Mammary epithelial cell (primary cell): ENCODE measurements at regions of chr7 and their contacts with region 1.

Region 1: GRCh38 chr7:149497456-149498261 is at the start of gene ZNF746:
- DNase-seq: peak; percentile 77
- H3K4me3 ChIP-seq: peak within 1 kb of the TSS; percentile 58 to 97 (median 88)
- H3K27ac ChIP-seq: peak within 1 kb of the TSS; percentile 58
- H3K4me1 ChIP-seq: peaks cover 11% of the 10 kb centered on the region
- H3K27me3 ChIP-seq: no peaks in the 10 kb centered on the region
- CTCF ChIP-seq: peak; percentile 22 to 67
- total RNA-seq, gene ZNF746: 22.1 to 34.3 TPM

Region 2: DNA sequence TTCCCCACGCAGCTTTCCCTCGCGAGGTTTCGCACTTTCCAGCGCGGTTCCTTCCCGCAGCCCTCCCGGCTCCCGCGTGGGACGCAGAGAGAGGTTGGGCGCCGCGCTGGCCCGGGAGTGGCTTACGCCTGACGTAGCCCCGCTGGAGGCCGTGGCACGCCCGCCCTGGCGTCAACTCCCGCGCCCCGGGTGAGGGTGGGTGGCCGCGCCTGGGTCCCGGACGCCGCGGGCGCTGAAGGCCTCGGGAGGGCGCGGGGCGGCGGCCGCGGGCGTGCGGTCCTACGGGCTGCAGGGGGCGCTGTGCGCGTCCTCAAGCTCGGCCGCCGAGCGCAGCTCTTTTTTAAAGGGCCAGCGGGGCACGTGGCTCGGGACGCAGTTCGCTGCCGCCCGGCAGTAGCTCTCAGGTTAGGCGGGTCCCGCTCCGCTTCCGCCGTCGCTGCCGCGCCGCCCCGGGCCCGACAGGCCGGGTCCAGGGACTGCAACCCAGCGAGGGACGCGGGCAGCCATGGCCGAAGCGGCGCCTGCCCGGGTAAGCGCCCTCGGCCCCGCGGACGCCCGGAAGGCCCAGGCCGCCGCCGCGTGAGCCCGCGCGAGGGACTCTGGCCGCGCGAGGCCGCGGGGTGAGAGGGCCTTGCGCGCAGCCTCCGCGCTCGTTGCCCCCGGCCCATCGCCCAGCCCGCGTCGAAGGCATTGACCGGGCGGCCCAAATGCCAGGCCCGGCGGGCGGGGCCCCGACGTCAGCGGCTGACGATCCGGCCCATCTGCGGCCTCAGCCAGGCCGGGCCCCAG is 235.6 kb before region 1 on chr7 and contains the start of gene ZNF783:
- CTCF ChIA-PET with region 1: no interaction called
- dilution Hi-C with region 1: no loop called
- in situ Hi-C with region 1: no loop called
- intact Hi-C with region 1: loop called (anchors 5 kb)
- DNase-seq: peak; percentile 77
- H3K4me3 ChIP-seq: peak within 1 kb of the TSS; percentile 53 to 70 (median 67)
- H3K27ac ChIP-seq: peak within 1 kb of the TSS; percentile 65
- H3K4me1 ChIP-seq: peaks cover 25% of the 10 kb centered on the region
- H3K27me3 ChIP-seq: no peaks in the 10 kb centered on the region
- CTCF ChIP-seq: peak; percentile 46 to 66
- total RNA-seq, gene ZNF783: 11.7 to 14.5 TPM

Region 3: GRCh38 chr7:149310113-149310836 is 187.4 kb before region 1 on chr7:
- CTCF ChIA-PET with region 1: no interaction called
- dilution Hi-C with region 1: no loop called
- in situ Hi-C with region 1: no loop called
- intact Hi-C with region 1: loop called (anchors 2 kb)
- DNase-seq: peak; percentile 85
- H3K4me3 ChIP-seq: no peak overlapping the region
- H3K27ac ChIP-seq: no peak overlapping the region
- H3K4me1 ChIP-seq: no peaks in the 10 kb centered on the region
- H3K27me3 ChIP-seq: no peaks in the 10 kb centered on the region
- CTCF ChIP-seq: peak; percentile 63 to 71

Region 4: DNA sequence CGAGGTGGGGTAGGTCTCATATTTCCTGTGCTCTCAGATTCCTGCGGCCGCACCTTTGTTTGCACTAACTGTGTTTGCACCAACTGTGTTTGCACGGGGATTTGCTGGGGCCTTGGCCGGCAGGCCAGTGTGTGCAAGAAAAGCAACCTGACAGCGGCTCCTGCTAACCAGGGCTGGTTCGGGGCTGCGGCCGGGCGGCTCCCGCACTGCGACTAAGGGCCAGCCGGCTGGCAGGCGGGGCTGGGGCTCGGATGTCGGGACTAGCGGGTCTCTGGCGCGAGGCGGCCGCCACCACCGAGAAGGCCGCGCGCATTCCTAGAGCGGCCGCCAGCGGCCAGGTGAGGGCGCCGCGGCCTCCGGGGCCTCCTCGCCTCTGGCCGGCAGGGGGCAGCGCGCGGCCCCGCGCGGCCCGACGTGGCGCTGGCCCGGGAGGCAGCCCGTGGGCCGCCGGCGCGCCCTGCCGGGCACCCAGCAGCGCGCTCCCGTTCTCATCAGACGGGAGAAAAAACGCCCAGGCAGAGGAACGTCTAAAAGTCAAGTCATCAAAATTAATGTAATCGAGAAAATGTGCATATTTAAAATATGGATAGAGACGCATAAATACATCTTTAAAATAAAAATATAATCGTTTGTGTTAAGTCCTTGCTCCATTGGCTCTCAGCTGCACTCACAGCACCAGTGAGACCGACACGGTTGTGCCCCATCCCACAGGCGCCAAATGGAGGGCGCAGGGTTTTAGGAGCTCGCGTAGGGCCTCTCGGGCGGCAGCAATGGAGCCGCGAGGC is 75.3 kb before region 1 on chr7:
- CTCF ChIA-PET with region 1: no interaction called
- dilution Hi-C with region 1: no loop called
- in situ Hi-C with region 1: no loop called
- intact Hi-C with region 1: loop called (anchors 2 kb)
- DNase-seq: peak; percentile 64
- H3K4me3 ChIP-seq: peak overlapping the region; percentile 47 to 56 (median 50)
- H3K27ac ChIP-seq: no peak overlapping the region
- H3K4me1 ChIP-seq: peaks cover 4% of the 10 kb centered on the region
- H3K27me3 ChIP-seq: no peaks in the 10 kb centered on the region
- CTCF ChIP-seq: peak; percentile 49 to 66

Region 5: GRCh38 chr7:149430192-149430591 is 67.5 kb before region 1 on chr7:
- CTCF ChIA-PET with region 1: no interaction called
- dilution Hi-C with region 1: loop called (anchors 5 kb)
- in situ Hi-C with region 1: no loop called
- intact Hi-C with region 1: no loop called
- DNase-seq: no peak
- H3K4me3 ChIP-seq: no peak overlapping the region
- H3K27ac ChIP-seq: no peak overlapping the region
- H3K4me1 ChIP-seq: no peaks in the 10 kb centered on the region
- H3K27me3 ChIP-seq: no peaks in the 10 kb centered on the region
- CTCF ChIP-seq: no peak

Region 6: DNA sequence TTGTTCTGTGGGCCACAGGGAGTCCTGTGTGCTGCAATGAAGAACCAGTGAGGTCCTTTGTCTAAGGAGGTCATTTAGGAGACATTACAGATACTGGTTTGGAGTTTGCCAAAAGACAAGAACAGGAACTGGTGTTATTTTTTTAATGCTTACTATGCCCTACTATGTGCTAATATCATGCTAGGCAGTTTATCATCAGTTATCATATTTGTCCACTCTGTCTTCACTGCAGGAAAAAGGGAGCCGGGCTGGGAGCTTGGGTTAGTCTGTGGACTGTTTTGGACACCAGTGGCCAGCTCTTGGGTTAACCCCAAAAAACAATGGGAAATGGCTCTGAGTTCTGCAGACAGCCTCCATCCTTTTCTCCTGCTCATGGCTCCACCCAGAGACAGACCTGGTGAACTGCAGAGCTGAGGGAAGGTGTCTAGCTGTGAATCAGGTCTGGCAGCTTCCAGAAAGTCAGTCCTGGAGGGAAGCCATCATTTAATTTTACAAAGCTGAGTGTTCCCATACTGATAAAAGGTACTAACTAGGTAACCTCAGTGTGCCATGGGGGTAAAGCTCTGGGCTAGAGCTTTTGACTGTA is 101.2 kb after region 1 on chr7:
- CTCF ChIA-PET with region 1: no interaction called
- dilution Hi-C with region 1: no loop called
- in situ Hi-C with region 1: no loop called
- intact Hi-C with region 1: loop called (anchors 1 kb)
- DNase-seq: peak; percentile 44
- H3K4me3 ChIP-seq: no peak overlapping the region
- H3K27ac ChIP-seq: no peak overlapping the region
- H3K4me1 ChIP-seq: no peaks in the 10 kb centered on the region
- H3K27me3 ChIP-seq: no peaks in the 10 kb centered on the region
- CTCF ChIP-seq: peak; percentile 52 to 72